ENCODE measurements at regions of chr9 and their contacts with region 1.

Region 1: DNA sequence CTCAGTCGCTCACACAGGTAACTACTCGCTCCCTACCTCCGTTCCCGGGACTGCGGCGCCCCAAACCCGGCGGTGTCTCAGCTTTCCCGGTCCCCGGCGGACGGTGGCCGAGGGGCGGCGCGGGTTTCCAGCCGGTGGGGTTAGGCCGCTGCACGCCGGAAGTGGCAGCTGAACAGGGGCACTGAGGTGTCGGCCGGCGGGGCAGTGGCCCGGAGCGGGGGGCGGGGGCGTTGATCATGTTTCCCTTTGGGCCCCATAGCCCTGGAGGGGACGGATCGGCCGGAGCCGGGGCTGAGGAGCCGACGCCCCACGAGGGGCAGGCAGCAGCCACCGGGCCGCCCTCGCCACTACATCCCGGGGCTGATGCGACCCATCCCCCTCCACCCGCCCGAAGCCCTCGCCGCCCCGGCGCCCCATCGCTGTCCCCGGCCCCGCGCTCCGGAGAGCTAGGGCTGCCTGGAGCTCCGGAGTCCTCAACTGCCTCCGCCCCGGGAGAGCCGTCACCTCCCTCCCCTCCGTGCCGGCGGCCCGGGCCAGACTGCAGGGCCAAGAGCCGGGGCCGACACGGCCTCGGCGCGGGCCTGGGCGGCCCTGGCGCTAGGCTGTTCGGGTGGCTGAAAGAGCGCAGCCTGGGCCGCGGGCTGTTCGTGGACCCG is at the start of gene DCAF10:
- DNase-seq: peak; percentile 96
- H3K4me3 ChIP-seq: peak within 1 kb of the TSS; percentile 80 to 95 (median 93)
- H3K27ac ChIP-seq: peak within 1 kb of the TSS; percentile 89 to 93 (median 91)
- H3K4me1 ChIP-seq: peaks cover 27 to 53% (median 35%) of the 10 kb centered on the region in 4 donors
- H3K27me3 ChIP-seq: no peaks in the 10 kb centered on the region
- CTCF ChIP-seq: peak in 2 of 3 experiments; percentile 5
- EP300 ChIP-seq: no peak
- POLR2A ChIP-seq: peak; percentile 49
- total RNA-seq, gene DCAF10: 19.4 to 40.6 (median 36.6) TPM

Region 2: DNA sequence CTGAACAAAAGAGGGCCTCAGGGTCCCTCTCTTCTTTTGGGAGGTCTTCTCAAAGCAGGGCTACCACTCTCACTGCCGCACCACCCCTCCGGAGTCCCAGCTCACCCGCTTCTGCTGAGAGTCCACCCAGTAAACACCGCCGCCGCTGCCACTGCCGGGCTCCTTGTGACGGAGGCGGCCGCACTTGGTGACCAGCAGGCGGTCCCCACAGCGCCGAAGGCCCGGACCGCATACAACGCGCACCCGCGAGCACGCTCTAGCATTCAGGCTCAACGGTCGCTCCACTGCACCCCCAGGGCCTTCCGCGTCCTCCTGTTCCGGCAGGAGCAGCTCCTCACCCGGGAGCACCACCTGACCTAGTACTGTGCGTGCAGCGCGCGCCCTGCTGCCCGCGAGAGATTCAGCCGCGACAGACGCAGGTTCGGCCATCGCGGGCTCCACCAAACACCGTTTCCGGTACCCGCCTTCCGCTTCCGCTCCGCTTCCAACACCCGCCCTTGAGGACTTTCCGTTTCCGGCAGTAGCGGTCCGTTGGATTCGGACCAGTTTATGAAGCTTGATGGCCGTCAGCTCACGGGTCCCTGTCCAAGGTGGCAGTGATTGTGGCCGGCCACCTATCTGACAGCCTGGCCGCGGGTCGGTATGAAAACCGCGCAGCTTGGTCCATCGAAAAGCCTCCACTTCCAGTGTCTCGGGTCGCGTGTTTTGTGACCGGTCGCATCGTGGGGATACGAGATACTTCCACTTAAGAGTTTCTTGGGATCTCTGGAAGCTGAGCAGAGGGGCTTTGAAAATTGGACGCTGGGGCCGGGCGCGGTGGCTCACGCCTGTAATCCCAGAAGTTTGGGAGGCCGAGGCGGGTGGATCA is 15.9 kb before region 1 on chr9 and contains the start of gene EXOSC3:
- intact Hi-C with region 1: loop called (anchors 2 kb)
- DNase-seq: peak; percentile 97
- H3K4me3 ChIP-seq: peak within 1 kb of the TSS; percentile 71 to 97 (median 91)
- H3K27ac ChIP-seq: peak within 1 kb of the TSS; percentile 84 to 89 (median 87)
- H3K4me1 ChIP-seq: peaks cover 10 to 34% (median 26%) of the 10 kb centered on the region in 4 donors
- H3K27me3 ChIP-seq: peaks cover 0 to 9% (median 5%) of the 10 kb centered on the region in 4 donors
- CTCF ChIP-seq: peak in 1 of 3 experiments; percentile 2
- EP300 ChIP-seq: no peak
- POLR2A ChIP-seq: peak; percentile 39
- total RNA-seq, gene EXOSC3: 32.0 to 52.0 (median 43.0) TPM

Measured in esophagus muscularis mucosa (tissue), 4 donors.